ENCODE measurements at regions of chr1 and their contacts with region 1.

Region 1: DNA sequence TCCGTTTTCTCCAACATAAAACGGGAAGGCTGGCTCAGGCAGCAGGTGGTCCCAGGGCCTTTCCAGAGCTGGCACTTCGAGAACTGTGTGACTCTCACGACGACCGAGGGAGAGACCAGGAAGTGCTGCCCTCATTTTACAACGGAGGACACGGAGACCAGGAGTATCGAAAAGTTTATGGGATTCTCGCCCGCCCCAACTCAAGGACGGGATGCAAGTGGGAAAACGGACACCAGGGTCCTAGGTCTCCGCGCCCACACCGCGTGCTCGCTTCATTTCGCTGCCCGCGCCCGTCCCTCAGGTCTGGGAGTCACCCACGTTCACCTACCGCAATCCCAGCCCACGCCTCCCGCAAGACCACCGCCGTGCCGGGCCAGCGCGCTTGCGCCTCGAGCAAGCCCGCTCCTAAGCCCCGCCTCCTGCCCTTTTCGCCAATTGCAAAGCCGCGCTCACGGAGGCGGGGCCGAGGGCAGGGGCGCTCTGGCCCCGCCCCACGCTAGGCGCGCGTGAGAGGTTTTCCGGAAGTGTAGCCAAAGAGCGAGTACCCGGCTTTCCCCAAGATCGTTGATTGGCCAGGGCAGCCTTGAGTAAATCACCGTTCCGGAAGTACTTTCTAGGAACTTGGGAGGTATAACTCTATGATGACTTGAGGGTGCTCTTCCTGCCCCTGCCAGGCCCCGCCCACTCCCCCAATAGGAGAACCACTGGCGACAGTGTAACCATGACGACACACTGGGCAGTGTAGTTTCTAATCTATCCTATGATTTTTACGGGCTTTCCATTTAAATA is at the start of gene PARS2:
- DNase-seq: peak; percentile 99
- ATAC-seq: peak; percentile 92
- H3K4me3 ChIP-seq: peak within 1 kb of the TSS; percentile 84
- H3K27ac ChIP-seq: no peak within 1 kb of the TSS
- H3K4me1 ChIP-seq: peaks cover 12% of the 10 kb centered on the region; the same call in 1 of the 2 replicates
- H3K27me3 ChIP-seq: no peaks in the 10 kb centered on the region
- CTCF ChIP-seq: no peak
- total RNA-seq, gene PARS2: 3.5 and 5.0 TPM in 2 replicates

Region 2: GRCh38 chr1:54715493-54716298 is 48.6 kb before region 1 on chr1 and contains the start of gene TTC4:
- CTCF ChIA-PET with region 1: no interaction called
- POLR2A ChIA-PET with region 1: interaction called, 4 read pairs
- intact Hi-C with region 1: loop called (anchors 1 kb)
- DNase-seq: peak; percentile 87
- ATAC-seq: peak; percentile 96
- H3K4me3 ChIP-seq: peak within 1 kb of the TSS; percentile 80
- H3K27ac ChIP-seq: peak within 1 kb of the TSS; percentile 68
- H3K4me1 ChIP-seq: peaks cover 12% of the 10 kb centered on the region
- H3K27me3 ChIP-seq: no peaks in the 10 kb centered on the region
- CTCF ChIP-seq: no peak
- total RNA-seq, gene TTC4: 28.2 and 34.7 TPM in 2 replicates

Region 3: DNA sequence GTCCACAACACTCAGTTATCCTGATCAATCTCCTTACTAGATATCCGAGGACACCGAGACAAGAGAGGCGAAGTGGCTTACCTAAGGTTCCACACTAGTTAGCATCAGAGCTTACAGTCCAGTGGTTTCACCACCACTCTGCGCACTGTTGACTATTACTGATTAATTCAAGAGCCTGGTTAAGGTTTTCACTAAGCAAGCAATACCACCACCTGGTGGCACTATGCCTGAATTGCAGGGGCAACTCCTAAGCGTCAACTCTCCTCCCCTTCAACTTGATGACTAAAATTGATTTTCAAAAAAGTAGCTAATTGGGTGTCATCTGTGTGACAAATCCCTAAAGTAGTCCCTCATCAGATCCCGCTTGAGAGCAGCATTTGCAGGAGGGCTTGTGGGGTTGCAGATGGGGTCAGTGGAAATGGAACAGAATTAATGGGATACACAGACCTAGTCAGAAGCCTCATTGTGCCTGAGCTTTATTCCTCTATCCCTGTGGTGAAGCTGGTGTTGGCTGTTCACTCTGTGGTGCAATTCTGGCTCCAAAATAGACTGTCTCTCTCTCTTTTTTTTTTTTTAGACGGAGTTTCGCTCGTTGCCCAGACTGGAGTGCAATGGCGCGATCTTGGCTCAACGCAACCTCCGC is 27.7 kb after region 1 on chr1:
- CTCF ChIA-PET with region 1: no interaction called
- POLR2A ChIA-PET with region 1: no interaction called
- intact Hi-C with region 1: loop called (anchors 2 kb)
- DNase-seq: peak; percentile 83
- ATAC-seq: no peak
- H3K4me3 ChIP-seq: no peak overlapping the region
- H3K27ac ChIP-seq: no peak overlapping the region
- H3K4me1 ChIP-seq: peaks cover 35% of the 10 kb centered on the region
- H3K27me3 ChIP-seq: no peaks in the 10 kb centered on the region
- CTCF ChIP-seq: peak; percentile 93